ENCODE measurements at regions of chr4 and their contacts with region 1.

Region 1: GRCh38 chr4:111283061-111283677 is 660.3 kb upstream of the PITX2 start:
- DNase-seq: peak; percentile 12
- H3K4me3 Mint-ChIP-seq: no peak overlapping the region
- H3K27ac Mint-ChIP-seq: no peak overlapping the region
- H3K4me1 Mint-ChIP-seq: no peaks in the 10 kb centered on the region
- H3K27me3 Mint-ChIP-seq: no peaks in the 10 kb centered on the region

Region 2: DNA sequence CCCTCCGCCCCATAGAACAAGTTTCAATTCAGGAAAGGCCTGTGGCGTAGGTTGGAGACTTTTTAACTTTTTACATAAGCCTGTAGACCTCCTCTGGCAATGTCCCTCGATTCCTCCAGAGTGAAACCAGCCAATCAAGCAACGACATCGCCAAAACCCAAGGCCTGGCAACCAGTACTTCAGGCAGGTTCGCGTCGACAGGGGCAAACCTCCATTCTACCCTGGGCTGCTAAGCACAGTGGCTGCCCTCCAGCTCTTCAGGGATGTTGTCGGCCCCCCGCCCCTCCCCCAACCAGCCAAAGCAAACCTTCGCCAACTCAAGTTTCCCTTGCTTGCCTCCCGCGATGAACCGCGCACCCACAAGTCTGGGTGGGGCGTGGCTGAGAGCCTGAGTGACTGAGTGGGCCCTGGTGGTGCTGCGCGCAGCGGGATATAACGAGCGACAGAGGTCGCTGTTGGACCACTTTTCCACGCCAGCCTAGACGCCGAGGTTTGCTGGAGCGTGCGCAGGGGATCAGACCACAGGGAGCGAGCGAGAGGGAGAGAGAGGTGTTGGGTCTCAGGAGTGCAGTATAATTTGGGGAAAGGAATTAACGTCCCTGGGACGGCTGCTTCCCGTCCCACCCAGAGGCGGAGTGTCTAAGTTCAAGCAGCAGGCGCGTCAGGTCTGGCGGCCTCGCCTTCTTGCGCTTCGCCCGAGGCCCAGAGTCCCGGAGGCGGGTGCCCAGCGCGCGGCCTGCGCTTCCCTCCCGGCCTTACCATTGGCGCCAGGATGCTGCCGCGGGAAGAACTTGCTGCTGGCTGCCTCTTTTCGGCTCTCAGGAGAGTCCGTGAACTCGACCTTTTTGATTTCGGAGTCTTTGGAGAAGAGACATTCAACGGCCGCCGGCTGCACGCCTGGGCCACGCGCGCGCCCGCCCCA is 651.3 kb before region 1 on chr4:
- intact Hi-C with region 1: loop called (anchors 2 kb)
- DNase-seq: no peak
- H3K4me3 Mint-ChIP-seq: peak overlapping the region; percentile 14
- H3K27ac Mint-ChIP-seq: peak overlapping the region; percentile 38
- H3K4me1 Mint-ChIP-seq: peaks cover 7% of the 10 kb centered on the region
- H3K27me3 Mint-ChIP-seq: peaks cover 81% of the 10 kb centered on the region

Measured in activated T-helper 2 cell treated with anti-CD3 and anti-CD28 coated beads, Interferon-gamma antibody, Interleukin-2, Interleukin-4, amounts not matched to agents 10 μg/mL and 5 μg/mL and 100 μg/mL, durations not matched to agents 14 hours and 24 hours and 36 hours (primary cell).